BJ (cell line): ENCODE measurements at regions of chr20 and their contacts with region 1.

Region 1: DNA sequence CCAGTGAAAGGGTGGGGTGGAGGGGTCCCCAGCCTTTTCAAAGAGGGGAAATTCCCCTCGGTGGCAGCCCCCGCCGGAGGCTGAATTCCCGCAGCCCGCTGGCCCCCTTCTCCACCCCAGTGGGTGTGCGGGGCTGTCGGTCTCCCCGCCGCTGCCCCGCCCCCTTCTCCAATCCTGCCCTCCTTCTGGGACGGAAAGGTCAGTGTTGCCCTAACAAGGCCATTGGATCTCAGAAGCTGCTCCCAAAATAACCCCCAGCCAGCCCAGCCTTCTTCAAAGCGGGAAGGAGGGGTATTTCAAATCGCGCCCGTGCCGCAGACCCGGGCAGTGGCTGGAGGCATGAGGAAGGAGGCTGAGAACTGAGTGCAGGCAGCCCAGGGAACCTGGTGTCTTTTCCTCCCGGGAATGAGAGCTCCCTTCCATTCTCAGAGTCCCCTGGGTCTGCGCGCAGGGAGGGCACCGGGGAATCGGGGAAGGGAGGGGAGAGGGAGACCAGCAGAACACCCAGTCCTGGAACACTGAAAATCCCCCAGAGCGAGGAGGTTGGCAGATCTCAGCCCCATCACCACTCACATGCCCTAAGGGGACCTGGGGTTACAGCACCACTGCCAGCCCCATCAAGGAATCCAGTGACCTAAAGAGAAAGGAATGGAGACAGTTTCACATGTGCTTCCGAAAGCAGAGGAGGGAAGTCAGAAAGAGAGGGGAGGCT is at the start of gene JPH2:
- DNase-seq: peak; percentile 63
- H3K4me3 ChIP-seq: peak within 1 kb of the TSS; percentile 44
- H3K27me3 ChIP-seq: no peaks in the 10 kb centered on the region; the same call in 1 of the 2 replicates
- CTCF ChIP-seq: no peak
- polyA plus RNA-seq, gene JPH2: 9.5 and 14.7 TPM in 2 replicates

Region 2: DNA sequence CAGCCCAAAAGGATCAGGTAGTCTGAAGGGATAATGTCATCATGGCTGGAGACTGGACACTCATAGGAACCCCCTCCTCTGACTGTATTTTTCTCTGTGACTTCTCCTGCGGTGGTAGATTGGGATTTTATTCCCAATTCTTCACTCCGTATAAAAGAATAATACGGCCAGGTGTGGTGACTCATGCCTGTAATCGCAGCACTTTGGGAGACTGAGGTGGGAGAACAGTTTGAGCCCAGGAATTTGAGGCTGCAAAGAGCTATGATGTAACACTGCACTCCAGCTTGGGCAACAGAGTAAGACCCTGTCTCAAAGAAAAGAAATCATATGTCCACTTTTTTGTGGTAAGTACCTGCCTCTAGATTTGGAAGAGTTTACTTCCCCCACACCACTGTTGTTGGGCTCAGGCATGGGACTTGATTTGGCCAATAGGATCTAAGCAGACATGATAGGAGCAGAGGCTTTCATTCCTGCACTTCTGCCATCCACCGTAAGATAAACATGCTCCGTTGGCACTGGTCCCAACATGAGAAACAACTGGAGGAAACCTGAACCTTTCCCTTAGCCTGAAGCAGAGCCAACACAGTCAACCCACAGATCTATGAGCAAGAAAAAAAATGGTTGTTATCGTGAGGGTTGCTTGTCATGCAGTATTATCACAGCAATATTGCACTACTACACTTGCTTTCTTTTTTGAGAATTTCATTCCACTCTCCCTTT is 82.2 kb before region 1 on chr20:
- CTCF ChIA-PET with region 1: interaction called, 307 read pairs
- POLR2A ChIA-PET with region 1: interaction called, 5 read pairs
- DNase-seq: no peak
- H3K4me3 ChIP-seq: no peak overlapping the region
- H3K27me3 ChIP-seq: peaks cover 7% of the 10 kb centered on the region
- CTCF ChIP-seq: no peak

Region 3: GRCh38 chr20:44129911-44130718 is 57.1 kb before region 1 on chr20:
- CTCF ChIA-PET with region 1: interaction called, 12 read pairs
- POLR2A ChIA-PET with region 1: no interaction called
- DNase-seq: no peak
- H3K4me3 ChIP-seq: no peak overlapping the region
- H3K27me3 ChIP-seq: no peaks in the 10 kb centered on the region
- CTCF ChIP-seq: no peak

Region 4: DNA sequence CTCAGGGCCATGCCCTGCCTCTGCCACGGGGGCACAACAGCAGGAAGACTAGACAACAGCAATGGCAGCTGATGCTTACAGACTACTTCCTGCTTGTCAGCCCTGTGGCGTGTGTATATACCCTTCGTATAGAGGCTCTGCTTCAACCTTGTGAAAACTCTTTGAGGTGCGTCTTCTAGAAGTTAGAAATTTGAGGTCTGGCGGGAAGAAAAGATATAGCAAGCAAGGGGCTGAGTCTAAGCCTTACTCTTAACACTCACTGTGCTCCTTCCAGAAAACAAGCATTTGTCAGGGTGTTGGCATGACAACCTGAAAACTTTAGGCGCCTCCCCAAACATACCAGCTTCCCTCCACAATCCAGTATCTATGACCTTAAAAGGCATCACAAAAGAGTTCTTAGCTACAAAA is 33.6 kb before region 1 on chr20:
- CTCF ChIA-PET with region 1: interaction called, 18 read pairs
- POLR2A ChIA-PET with region 1: no interaction called
- DNase-seq: no peak
- H3K4me3 ChIP-seq: no peak overlapping the region
- H3K27me3 ChIP-seq: no peaks in the 10 kb centered on the region
- CTCF ChIP-seq: no peak

Region 5: DNA sequence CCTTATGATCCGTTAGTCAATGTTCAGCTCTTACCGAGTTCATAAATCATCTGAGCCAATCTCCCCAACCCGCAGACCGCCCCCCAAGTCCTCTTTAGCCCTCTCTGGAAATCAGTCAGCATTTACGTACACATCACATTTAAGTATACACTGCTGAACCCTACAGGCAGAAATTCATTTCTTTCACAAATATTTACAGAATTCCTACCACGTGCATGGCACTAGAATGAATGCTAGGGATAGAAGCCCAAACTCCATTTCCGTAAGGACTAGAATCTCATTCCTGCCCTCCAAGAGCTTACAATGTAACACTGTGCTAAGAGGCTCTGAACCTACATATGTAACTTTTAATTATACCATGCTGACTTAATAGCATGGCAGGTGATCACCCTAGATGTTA is 21.6 kb after region 1 on chr20:
- CTCF ChIA-PET with region 1: interaction called, 10 read pairs
- POLR2A ChIA-PET with region 1: interaction called, 4 read pairs
- DNase-seq: no peak
- H3K4me3 ChIP-seq: peak overlapping the region; percentile 86
- H3K27me3 ChIP-seq: no peaks in the 10 kb centered on the region
- CTCF ChIP-seq: peak; percentile 16; the same call in 1 of the 2 replicates